Body of pancreas (tissue), 4 donors: ENCODE measurements at regions of chr10 and their contacts with region 1.

Region 1: GRCh38 chr10:11625019-11625735 is 13.7 kb upstream of the USP6NL start:
- DNase-seq: peak in 1 of 4 donors; percentile 13
- ATAC-seq: no peak
- H3K4me3 ChIP-seq: no peak overlapping the region
- H3K27ac ChIP-seq: no peak overlapping the region
- H3K4me1 ChIP-seq: no peaks in the 10 kb centered on the region
- H3K27me3 ChIP-seq: no peaks in the 10 kb centered on the region
- CTCF ChIP-seq: no peak
- POLR2A ChIP-seq: no peak

Region 2: DNA sequence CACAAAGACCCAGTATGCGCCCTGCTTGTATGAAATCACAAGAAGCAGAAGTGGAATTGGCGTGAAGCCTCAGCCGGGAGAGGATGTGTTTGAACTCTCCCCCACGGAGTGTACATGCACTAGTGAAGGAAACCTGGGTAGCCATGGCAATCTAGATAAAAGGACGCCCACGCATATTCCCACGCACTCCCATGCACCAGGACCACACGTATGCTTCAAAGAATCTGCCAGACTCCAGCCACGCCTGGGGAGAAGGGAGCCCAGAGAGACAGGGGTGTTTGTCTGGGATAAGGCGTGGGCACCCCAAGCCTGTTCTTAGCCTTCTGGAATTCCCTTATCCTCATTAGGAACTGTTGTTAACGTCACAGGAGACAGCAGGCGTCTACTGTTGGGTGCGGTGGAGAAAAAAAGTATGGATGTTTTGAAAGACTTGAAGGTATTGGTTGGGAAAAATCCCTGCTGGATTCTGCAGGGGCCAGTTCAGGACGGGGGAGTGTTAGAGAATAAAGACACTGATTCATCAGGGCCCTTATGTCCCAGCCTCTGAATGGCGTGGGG is 88.1 kb after region 1 on chr10:
- intact Hi-C with region 1: loop called (anchors 10 kb)
- DNase-seq: peak in 2 of 4 donors; percentile 34 to 51
- ATAC-seq: peak; percentile 37
- H3K4me3 ChIP-seq: no peak overlapping the region
- H3K27ac ChIP-seq: no peak overlapping the region
- H3K4me1 ChIP-seq: peaks cover 22% of the 10 kb centered on the region
- H3K27me3 ChIP-seq: no peaks in the 10 kb centered on the region
- CTCF ChIP-seq: no peak
- POLR2A ChIP-seq: no peak